Tibial artery (tissue), 4 donors: ENCODE measurements at regions of chr1 and their contacts with region 1.

Region 1: DNA sequence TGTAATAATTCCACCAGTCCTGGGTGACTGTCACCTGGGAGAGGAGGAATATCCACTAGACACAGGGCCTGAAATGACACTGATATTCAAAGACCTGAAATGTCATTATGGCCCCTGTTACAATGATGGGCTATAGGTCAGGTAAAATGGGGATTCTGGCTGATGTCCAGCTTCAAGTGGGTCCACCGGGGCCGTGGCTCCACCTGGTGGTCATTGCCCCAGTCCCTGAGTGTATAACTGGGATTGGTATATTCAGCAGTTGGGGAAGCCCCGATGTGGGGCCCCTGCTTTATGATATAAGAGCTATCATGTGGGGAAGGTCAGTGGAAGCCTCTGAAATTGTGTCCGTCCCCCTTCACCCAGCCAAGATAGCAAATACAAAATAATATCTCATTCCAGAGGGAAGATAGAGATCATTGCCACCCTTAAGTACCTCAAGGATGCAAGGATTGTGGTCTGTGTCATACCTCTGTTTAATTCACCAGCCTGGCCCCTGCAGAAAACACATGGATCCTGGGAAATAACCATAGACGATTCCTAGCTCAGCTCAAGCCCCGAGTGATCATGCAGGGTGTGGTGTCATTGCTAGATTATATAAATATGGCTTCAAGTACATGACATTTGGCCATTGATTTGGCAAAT is 19.4 kb downstream of the PLEKHO1 start:
- DNase-seq: peak; percentile 62 to 79
- H3K4me3 ChIP-seq: no peak overlapping the region
- H3K27ac ChIP-seq: no peak overlapping the region
- H3K4me1 ChIP-seq: peaks cover 0 to 36% (median 6%) of the 10 kb centered on the region in 4 donors
- H3K27me3 ChIP-seq: no peaks in the 10 kb centered on the region
- CTCF ChIP-seq: peak; percentile 83 to 89

Region 2: DNA sequence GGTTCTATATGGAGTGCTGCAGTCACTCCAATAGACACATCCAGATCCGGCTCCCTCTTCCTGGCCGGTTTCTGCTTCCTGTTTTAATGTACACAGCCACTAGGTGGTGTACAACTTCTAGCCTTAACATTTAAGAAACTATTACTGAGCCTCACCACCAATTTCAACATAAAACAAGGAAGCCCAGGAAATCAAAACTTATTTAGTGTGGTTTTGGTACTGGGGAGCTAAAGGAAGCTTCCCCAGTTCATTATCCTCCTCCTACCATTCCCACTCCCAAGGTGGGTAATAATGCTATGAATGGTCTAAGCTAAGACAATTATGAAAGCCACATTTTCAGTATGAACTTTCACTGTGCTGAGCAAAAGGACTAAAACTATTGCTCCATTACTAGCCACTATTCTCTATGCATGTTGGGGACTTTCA is 206.9 kb before region 1 on chr1:
- intact Hi-C with region 1: loop called (anchors 5 kb)
- DNase-seq: peak in 1 of 2 donors; percentile 63
- H3K4me3 ChIP-seq: no peak overlapping the region
- H3K27ac ChIP-seq: peak overlapping the region; percentile 31 to 59
- H3K4me1 ChIP-seq: peaks cover 0 to 21% (median 17%) of the 10 kb centered on the region in 4 donors
- H3K27me3 ChIP-seq: no peaks in the 10 kb centered on the region
- CTCF ChIP-seq: peak; percentile 74 to 84

Region 3: GRCh38 chr1:150072959-150073358 is 96.1 kb before region 1 on chr1:
- intact Hi-C with region 1: loop called (anchors 2 kb)
- DNase-seq: no peak
- H3K4me3 ChIP-seq: no peak overlapping the region
- H3K27ac ChIP-seq: peak overlapping the region in 1 of 2 donors; percentile 25
- H3K4me1 ChIP-seq: peaks cover 0 to 27% (median 16%) of the 10 kb centered on the region in 4 donors
- H3K27me3 ChIP-seq: no peaks in the 10 kb centered on the region
- CTCF ChIP-seq: peak; percentile 53 to 59

Region 4: GRCh38 chr1:150213170-150214098 is 44.4 kb after region 1 on chr1:
- intact Hi-C with region 1: no loop called
- DNase-seq: peak; percentile 95 to 97
- H3K4me3 ChIP-seq: peak overlapping the region; percentile 50 to 60
- H3K27ac ChIP-seq: peak overlapping the region; percentile 76 to 80
- H3K4me1 ChIP-seq: peaks cover 0 to 11% (median 3%) of the 10 kb centered on the region in 4 donors
- H3K27me3 ChIP-seq: no peaks in the 10 kb centered on the region
- CTCF ChIP-seq: peak in 1 of 2 experiments; percentile 23